GM12878 (cell line): ENCODE measurements at regions of chr15 and their contacts with region 1.

Region 1: DNA sequence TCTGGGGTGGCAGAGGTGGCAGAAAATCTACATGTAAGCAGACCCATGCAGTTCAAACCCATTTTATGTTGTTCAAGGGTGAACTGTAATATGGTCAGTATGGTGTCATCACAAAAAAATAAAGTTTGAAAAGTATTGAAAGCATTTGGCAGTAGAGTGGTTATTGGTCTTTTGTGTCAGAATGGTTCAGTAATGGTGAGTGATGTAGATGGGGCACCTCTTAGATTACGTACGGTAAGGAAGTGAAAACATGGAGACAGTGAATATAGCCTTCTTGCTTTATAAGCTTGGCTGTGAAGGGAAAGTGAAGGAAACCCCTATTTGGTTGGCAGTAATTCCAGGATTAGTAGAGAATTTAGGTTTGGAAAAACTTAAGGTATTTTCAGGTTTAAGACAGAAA is 17.2 kb upstream of the CCNB2 start:
- DNase-seq: no peak
- ATAC-seq: no peak
- H3K4me3 ChIP-seq: no peak overlapping the region
- H3K27ac ChIP-seq: no peak overlapping the region
- H3K4me1 ChIP-seq: no peaks in the 10 kb centered on the region
- H3K27me3 ChIP-seq: no peaks in the 10 kb centered on the region
- CTCF ChIP-seq: no peak
- EP300 ChIP-seq: no peak
- POLR2A ChIP-seq: no peak
- RAD21 ChIP-seq: no peak

Region 2: DNA sequence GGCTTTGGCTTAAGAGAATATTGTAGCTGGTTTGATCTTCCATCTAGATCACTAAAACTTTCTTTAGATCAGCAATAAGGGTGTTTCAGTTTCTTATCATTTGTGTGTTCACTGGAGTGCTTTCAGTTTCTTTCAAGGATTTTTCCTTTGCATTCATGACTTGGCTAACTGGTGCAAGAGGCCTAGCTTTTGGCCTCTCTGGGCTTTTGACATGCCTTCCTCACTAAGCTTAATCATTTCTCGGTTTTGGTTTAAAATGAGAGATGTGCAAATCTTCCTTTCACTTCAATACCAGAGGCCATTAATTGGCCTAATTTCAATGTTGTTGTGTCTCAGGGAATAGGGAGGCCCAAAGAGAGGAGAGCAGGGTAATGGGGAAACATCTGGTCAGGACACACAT is 13.1 kb before region 1 on chr15:
- CTCF ChIA-PET with region 1: interaction called, 5 read pairs
- POLR2A ChIA-PET with region 1: no interaction called
- RAD21 ChIA-PET with region 1: no interaction called
- SMC1A ChIA-PET with region 1: interaction called, 10 read pairs
- in situ Hi-C with region 1: no loop called
- intact Hi-C with region 1: no loop called
- DNase-seq: peak; percentile 5
- ATAC-seq: peak; percentile 77
- H3K4me3 ChIP-seq: no peak overlapping the region
- H3K27ac ChIP-seq: peak overlapping the region; percentile 4; the same call in 1 of the 2 replicates
- H3K4me1 ChIP-seq: peaks cover 8% of the 10 kb centered on the region
- H3K27me3 ChIP-seq: no peaks in the 10 kb centered on the region
- CTCF ChIP-seq: no peak
- EP300 ChIP-seq: no peak
- POLR2A ChIP-seq: no peak
- RAD21 ChIP-seq: no peak